ENCODE measurements at regions of chr10 and their contacts with region 1.

Region 1: DNA sequence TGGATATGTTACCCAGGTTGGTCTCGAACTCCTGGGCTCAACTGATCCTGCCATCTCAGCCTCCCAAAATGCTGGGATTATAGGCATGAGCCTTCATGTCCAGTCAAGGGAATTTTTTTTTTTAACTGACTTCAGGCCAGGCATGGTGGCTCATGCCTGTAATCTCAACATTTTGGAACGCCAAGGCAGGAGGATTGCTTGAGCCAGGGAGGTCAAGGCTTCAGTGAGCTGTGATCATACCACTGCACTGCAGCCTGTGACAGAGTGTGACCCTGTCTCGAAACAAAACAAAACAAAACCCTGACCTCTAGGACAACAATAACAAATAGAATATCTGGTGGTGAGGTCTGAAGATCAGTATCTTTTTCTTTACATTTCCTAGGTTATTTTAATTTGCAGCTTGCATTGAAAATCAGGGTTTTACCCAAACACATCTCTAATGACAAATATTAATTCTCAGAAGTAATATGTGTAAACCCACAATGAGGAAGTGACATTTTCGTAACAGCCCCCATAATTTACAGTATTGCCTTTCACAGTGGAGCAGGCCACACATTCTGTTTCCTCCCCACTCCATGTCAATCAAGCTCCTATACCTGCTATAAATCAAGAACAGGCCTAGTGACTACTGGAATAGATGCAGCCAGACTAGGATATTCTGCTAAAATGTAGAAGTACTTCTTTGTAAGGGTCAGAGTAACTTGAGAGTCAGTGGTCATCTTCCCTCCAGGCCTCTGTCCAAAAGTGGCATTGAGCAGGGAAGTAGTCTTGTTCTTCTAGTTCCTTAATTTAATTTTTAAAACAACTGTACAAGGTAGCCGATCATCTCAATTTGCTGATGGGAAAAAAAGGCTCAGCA is 43.3 kb upstream of the ECHDC3 start:
- DNase-seq: peak; percentile 77
- ATAC-seq: peak; percentile 83
- H3K4me3 ChIP-seq: no peak overlapping the region
- H3K27ac ChIP-seq: peak overlapping the region; percentile 86
- H3K4me1 ChIP-seq: peaks cover 28% of the 10 kb centered on the region
- H3K27me3 ChIP-seq: no peaks in the 10 kb centered on the region
- CTCF ChIP-seq: no peak
- EP300 ChIP-seq: peak in 1 of 2 experiments; percentile 88; a peak in 2 of 4 replicates
- POLR2A ChIP-seq: no peak
- RAD21 ChIP-seq: 0 out of 2 replicates have a peak, but pooled peaks have one; percentile 5

Region 2: GRCh38 chr10:11602919-11603523 is 95.9 kb before region 1 on chr10:
- CTCF ChIA-PET with region 1: interaction called, 13 read pairs
- POLR2A ChIA-PET with region 1: interaction called, 4 read pairs
- RAD21 ChIA-PET with region 1: interaction called, 5 read pairs
- SMC1A ChIA-PET with region 1: interaction called, 23 read pairs
- in situ Hi-C with region 1: no loop called
- intact Hi-C with region 1: loop called (anchors 5 kb)
- DNase-seq: peak; percentile 67
- ATAC-seq: peak; percentile 62
- H3K4me3 ChIP-seq: peak overlapping the region; percentile 54
- H3K27ac ChIP-seq: peak overlapping the region; percentile 64
- H3K4me1 ChIP-seq: peaks cover 45% of the 10 kb centered on the region
- H3K27me3 ChIP-seq: no peaks in the 10 kb centered on the region
- CTCF ChIP-seq: no peak
- EP300 ChIP-seq: peak; percentile 51 to 59; a peak in 2 of 4 replicates
- POLR2A ChIP-seq: no peak
- RAD21 ChIP-seq: no peak

Region 3: DNA sequence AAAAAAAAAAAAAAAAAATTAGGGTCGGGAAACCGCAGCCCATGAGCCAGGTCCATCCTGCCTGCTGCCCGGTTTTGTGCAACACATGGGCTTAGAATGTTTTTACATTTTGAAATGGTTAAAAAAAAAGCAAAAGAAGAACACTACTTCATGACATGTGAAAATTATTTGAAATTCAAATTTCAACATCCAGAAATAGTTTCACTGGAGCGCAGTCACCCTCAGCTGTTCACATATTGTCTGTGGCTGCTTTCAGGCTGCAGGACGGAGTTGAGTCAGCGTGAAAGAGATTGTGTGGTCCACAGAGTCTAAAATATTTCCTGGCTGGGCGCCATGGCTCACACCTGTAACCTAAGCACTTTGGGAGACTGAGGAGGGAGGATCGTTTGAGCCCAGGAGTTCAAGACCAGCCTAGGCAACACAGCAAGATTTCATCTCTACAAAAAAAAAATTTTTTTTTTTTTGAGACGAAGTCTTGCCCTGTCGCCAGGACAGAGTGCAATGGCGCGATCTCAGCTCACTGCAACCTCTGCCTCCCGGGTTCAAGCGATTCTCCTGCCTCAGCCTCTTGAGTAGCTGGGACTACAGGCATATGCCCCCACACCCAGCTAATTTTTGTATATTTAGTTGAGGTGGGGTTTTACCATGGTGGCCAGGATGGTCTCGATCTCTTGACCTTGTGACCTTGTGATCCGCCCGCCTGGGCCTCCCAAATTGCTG is 20.7 kb before region 1 on chr10:
- CTCF ChIA-PET with region 1: interaction called, 10 read pairs
- POLR2A ChIA-PET with region 1: no interaction called
- RAD21 ChIA-PET with region 1: interaction called, 11 read pairs
- SMC1A ChIA-PET with region 1: interaction called, 11 read pairs
- in situ Hi-C with region 1: no loop called
- intact Hi-C with region 1: loop called (anchors 1 kb)
- DNase-seq: peak; percentile 98
- ATAC-seq: peak; percentile 93
- H3K4me3 ChIP-seq: peak overlapping the region; percentile 48; the same call in 1 of the 2 replicates
- H3K27ac ChIP-seq: peak overlapping the region; percentile 92
- H3K4me1 ChIP-seq: peaks cover 63% of the 10 kb centered on the region
- H3K27me3 ChIP-seq: no peaks in the 10 kb centered on the region
- CTCF ChIP-seq: no peak
- EP300 ChIP-seq: peak; percentile 88 to 94
- POLR2A ChIP-seq: no peak
- RAD21 ChIP-seq: peak; percentile 40

Region 4: GRCh38 chr10:11684717-11685645 is 13.9 kb before region 1 on chr10:
- CTCF ChIA-PET with region 1: interaction called, 17 read pairs
- POLR2A ChIA-PET with region 1: interaction called, 10 read pairs
- RAD21 ChIA-PET with region 1: interaction called, 31 read pairs
- SMC1A ChIA-PET with region 1: interaction called, 23 read pairs
- in situ Hi-C with region 1: no loop called
- intact Hi-C with region 1: loop called (anchors 1 kb)
- DNase-seq: peak; percentile 94
- ATAC-seq: peak; percentile 83
- H3K4me3 ChIP-seq: peak overlapping the region; percentile 58
- H3K27ac ChIP-seq: peak overlapping the region; percentile 100
- H3K4me1 ChIP-seq: peaks cover 51% of the 10 kb centered on the region
- H3K27me3 ChIP-seq: no peaks in the 10 kb centered on the region
- CTCF ChIP-seq: no peak
- EP300 ChIP-seq: peak; percentile 66 to 68; a peak in 2 of 4 replicates
- POLR2A ChIP-seq: peak; percentile 79
- RAD21 ChIP-seq: peak; percentile 29

Region 5: DNA sequence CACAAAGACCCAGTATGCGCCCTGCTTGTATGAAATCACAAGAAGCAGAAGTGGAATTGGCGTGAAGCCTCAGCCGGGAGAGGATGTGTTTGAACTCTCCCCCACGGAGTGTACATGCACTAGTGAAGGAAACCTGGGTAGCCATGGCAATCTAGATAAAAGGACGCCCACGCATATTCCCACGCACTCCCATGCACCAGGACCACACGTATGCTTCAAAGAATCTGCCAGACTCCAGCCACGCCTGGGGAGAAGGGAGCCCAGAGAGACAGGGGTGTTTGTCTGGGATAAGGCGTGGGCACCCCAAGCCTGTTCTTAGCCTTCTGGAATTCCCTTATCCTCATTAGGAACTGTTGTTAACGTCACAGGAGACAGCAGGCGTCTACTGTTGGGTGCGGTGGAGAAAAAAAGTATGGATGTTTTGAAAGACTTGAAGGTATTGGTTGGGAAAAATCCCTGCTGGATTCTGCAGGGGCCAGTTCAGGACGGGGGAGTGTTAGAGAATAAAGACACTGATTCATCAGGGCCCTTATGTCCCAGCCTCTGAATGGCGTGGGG is 14.3 kb after region 1 on chr10:
- CTCF ChIA-PET with region 1: interaction called, 13 read pairs
- POLR2A ChIA-PET with region 1: no interaction called
- RAD21 ChIA-PET with region 1: interaction called, 12 read pairs
- SMC1A ChIA-PET with region 1: interaction called, 20 read pairs
- in situ Hi-C with region 1: no loop called
- intact Hi-C with region 1: loop called (anchors 2 kb)
- DNase-seq: peak; percentile 59
- ATAC-seq: peak; percentile 31
- H3K4me3 ChIP-seq: no peak overlapping the region
- H3K27ac ChIP-seq: no peak overlapping the region; the same call in 1 of the 2 replicates
- H3K4me1 ChIP-seq: peaks cover 42% of the 10 kb centered on the region
- H3K27me3 ChIP-seq: no peaks in the 10 kb centered on the region
- CTCF ChIP-seq: no peak
- EP300 ChIP-seq: 0 out of 4 replicates have a peak, but pooled peaks of 1 of the 2 experiments have one; percentile 10
- POLR2A ChIP-seq: no peak
- RAD21 ChIP-seq: no peak

Region 6: GRCh38 chr10:11719496-11720217 is 20.7 kb after region 1 on chr10:
- CTCF ChIA-PET with region 1: interaction called, 12 read pairs
- POLR2A ChIA-PET with region 1: no interaction called
- RAD21 ChIA-PET with region 1: interaction called, 7 read pairs
- SMC1A ChIA-PET with region 1: interaction called, 7 read pairs
- in situ Hi-C with region 1: no loop called
- intact Hi-C with region 1: loop called (anchors 2 kb)
- DNase-seq: no peak
- ATAC-seq: no peak
- H3K4me3 ChIP-seq: no peak overlapping the region
- H3K27ac ChIP-seq: no peak overlapping the region
- H3K4me1 ChIP-seq: peaks cover 19% of the 10 kb centered on the region
- H3K27me3 ChIP-seq: no peaks in the 10 kb centered on the region; a peak in 1 of 4 replicates
- CTCF ChIP-seq: no peak
- EP300 ChIP-seq: no peak
- POLR2A ChIP-seq: no peak
- RAD21 ChIP-seq: no peak

Region 7: DNA sequence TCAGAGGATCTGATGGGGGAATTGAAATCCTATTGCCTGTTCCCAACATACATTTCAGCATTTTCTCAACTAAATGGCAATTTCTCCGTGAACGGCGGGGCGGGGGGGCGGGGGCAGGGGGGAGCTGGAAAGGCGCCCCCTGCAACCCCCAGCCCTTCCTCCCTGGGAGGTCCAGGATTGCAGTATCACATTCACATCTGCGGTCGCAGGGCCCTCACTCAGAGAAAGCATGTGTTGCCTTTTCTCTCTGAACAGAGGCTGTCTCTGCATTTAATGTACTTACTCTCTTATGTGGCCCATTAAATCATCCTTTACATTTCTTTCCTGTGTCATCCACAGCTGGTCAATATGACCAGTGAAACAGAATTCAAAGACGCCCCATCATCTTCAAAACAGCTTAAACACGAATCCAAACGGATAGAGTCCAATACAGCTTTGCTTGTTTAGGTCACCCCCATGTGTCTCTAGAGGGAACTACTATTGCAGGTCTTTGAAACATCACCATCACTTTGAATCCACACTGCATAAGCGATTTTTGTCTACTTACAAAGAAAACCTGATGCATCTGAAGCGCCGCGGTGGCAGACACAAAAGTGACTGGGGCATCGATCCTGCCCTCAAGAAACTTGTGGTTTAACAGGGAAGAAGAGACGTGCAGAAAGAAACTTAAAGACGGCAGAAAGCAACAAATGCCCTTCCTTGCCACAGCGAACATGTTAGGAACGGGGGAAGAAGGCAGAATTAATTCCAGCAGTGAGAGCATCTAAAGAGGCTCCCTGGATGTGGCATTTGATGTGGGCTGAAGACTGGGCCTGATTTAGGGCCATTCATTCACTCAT is 26.2 kb after region 1 on chr10:
- CTCF ChIA-PET with region 1: interaction called, 12 read pairs
- POLR2A ChIA-PET with region 1: no interaction called
- RAD21 ChIA-PET with region 1: interaction called, 7 read pairs
- SMC1A ChIA-PET with region 1: interaction called, 6 read pairs
- in situ Hi-C with region 1: no loop called
- intact Hi-C with region 1: no loop called
- DNase-seq: peak; percentile 60
- ATAC-seq: peak; percentile 98
- H3K4me3 ChIP-seq: no peak overlapping the region
- H3K27ac ChIP-seq: no peak overlapping the region
- H3K4me1 ChIP-seq: peaks cover 3% of the 10 kb centered on the region
- H3K27me3 ChIP-seq: no peaks in the 10 kb centered on the region; a peak in 2 of 4 replicates
- CTCF ChIP-seq: peak; percentile 81 to 92 (median 90)
- EP300 ChIP-seq: no peak
- POLR2A ChIP-seq: no peak
- RAD21 ChIP-seq: peak; percentile 100

Measured in GM12878 (cell line).